Sigmoid colon (tissue), 7 donors: ENCODE measurements at regions of chr3 and their contacts with region 1.

Region 1: GRCh38 chr3:42012935-42013690 is 51.2 kb upstream of the ULK4 start:
- DNase-seq: peak; percentile 85
- H3K4me3 ChIP-seq: peak overlapping the region; percentile 42 to 99 (median 96)
- H3K27ac ChIP-seq: peak overlapping the region; percentile 90 to 95 (median 92)
- H3K4me1 ChIP-seq: peaks cover 0 to 39% (median 29%) of the 10 kb centered on the region in 4 donors
- H3K27me3 ChIP-seq: no peaks in the 10 kb centered on the region
- CTCF ChIP-seq: peak in 1 of 4 experiments; percentile 10
- EP300 ChIP-seq: no peak
- POLR2A ChIP-seq: peak in 1 of 2 donors; percentile 20

Region 2: GRCh38 chr3:41893977-41894376 is 119.1 kb before region 1 on chr3:
- intact Hi-C with region 1: loop called (anchors 5 kb)
- DNase-seq: no peak
- H3K4me3 ChIP-seq: no peak overlapping the region
- H3K27ac ChIP-seq: no peak overlapping the region
- H3K4me1 ChIP-seq: no peaks in the 10 kb centered on the region
- H3K27me3 ChIP-seq: no peaks in the 10 kb centered on the region
- CTCF ChIP-seq: peak in 3 of 4 experiments; percentile 20 to 56 (median 30)
- EP300 ChIP-seq: no peak
- POLR2A ChIP-seq: no peak

Region 3: DNA sequence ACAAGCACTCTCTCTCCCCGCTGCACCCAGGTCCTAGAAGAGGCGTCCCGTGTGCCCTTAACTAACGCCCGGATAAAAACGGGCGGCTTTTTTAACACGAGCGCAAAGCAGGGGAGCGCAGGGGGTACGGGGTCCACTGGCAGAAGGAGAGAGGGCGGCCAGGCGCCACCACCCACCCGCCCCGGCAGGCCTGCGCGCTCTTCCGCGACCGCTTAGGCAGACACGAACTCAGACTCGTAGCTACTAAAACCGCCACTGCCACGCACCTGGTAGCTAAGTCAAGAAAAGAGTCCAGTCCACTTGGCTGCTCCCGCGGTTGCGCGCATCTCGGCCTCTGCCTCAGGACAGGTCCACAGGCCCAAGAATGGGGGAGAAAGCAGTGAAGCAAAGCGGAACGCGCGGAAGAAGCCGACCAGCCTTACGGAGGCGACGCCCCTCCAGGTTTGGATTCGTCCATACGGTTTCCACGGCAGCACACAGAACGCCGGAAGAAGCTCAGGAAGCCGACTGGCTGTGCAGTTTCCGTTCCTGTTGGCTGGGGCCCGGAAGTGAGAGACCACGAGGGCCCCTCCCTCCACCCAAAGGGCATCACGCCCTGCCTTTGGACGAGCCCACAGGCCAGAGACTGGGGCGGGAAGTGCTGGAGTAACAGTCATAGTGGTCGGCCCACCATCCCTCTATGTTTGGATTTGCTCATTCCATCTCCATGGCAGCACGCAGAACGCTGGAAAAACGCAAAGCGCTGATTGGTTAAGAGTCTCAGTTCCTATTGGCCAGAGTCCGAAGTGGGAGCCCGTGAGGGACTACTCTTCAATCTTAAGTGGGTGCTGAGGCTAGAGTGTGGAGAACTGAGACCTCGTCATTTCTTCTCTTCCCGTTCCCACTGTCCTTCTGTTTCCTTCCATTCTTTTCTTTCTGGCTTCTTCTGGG is 51.1 kb before region 1 on chr3 and contains the start of gene ULK4:
- intact Hi-C with region 1: loop called (anchors 1 kb)
- DNase-seq: peak; percentile 99
- H3K4me3 ChIP-seq: peak within 1 kb of the TSS; percentile 79 to 97 (median 90)
- H3K27ac ChIP-seq: peak within 1 kb of the TSS; percentile 88 to 93 (median 90)
- H3K4me1 ChIP-seq: peaks cover 0 to 14% (median 10%) of the 10 kb centered on the region in 4 donors
- H3K27me3 ChIP-seq: no peaks in the 10 kb centered on the region
- CTCF ChIP-seq: no peak
- EP300 ChIP-seq: peak in 1 of 4 donors; percentile 32
- POLR2A ChIP-seq: peak in 1 of 2 donors; percentile 7
- total RNA-seq, gene ULK4: 8.9 to 18.6 (median 16.6) TPM

Region 4: DNA sequence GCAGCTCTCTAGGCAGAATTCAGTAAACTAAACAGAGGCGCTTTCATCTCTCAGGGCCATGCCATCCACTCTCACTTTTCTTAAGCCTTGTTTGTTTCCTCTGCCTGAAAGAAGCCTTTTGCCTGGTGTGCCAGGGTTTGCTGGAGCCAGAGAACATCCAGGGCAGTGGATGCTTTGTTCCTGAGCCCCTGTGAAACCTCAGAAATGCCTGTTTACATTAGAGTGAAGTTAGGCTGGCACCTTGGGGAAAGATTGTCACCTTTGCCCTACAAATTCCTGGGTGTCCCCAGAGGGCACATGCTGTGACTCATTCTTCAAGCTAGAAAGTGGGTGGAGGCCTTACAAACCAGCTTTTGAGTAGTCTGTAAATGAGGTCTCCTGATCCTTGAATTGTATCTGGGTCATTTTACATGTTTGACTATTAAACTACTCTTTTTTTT is 67.4 kb after region 1 on chr3:
- intact Hi-C with region 1: loop called (anchors 5 kb)
- DNase-seq: peak; percentile 85
- H3K4me3 ChIP-seq: no peak overlapping the region
- H3K27ac ChIP-seq: peak overlapping the region; percentile 79 to 86 (median 84)
- H3K4me1 ChIP-seq: peaks cover 0 to 62% (median 60%) of the 10 kb centered on the region in 4 donors
- H3K27me3 ChIP-seq: no peaks in the 10 kb centered on the region
- CTCF ChIP-seq: no peak
- EP300 ChIP-seq: peak; percentile 41 to 96 (median 74)
- POLR2A ChIP-seq: no peak

Region 5: GRCh38 chr3:42090973-42091731 is 78.0 kb after region 1 on chr3 and contains the start of gene TRAK1:
- intact Hi-C with region 1: loop called (anchors 2 kb)
- DNase-seq: peak; percentile 82
- H3K4me3 ChIP-seq: peak within 1 kb of the TSS; percentile 9 to 37 (median 25)
- H3K27ac ChIP-seq: peak within 1 kb of the TSS; percentile 74 to 88 (median 82)
- H3K4me1 ChIP-seq: peaks cover 0 to 48% (median 21%) of the 10 kb centered on the region in 4 donors
- H3K27me3 ChIP-seq: no peaks in the 10 kb centered on the region
- CTCF ChIP-seq: peak in 1 of 4 experiments; percentile 19
- EP300 ChIP-seq: peak in 1 of 4 donors; percentile 45
- POLR2A ChIP-seq: no peak
- total RNA-seq, gene TRAK1: 17.6 to 42.7 (median 27.2) TPM

Region 6: DNA sequence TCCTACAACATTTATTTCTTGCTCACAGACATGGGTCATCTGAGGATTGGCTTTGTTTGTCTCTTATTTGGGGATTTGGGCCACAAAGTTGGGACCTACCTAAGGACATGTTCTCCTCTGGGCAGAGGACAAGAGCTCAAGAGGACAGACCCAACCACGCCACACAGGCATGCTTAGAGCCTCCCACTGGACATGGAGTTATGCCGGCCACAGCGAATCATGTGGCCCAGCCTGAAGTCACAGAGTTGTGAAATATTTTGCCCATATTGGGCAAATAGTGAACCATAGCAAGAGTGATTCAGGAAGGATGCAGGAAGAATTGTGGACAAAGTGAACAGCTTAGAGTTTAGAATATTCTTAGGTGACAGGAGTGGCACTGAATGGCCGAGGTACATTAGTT is 87.9 kb after region 1 on chr3:
- intact Hi-C with region 1: loop called (anchors 1 kb)
- DNase-seq: no peak
- H3K4me3 ChIP-seq: no peak overlapping the region
- H3K27ac ChIP-seq: peak overlapping the region; percentile 11 to 70 (median 40)
- H3K4me1 ChIP-seq: peaks cover 0 to 58% (median 47%) of the 10 kb centered on the region in 4 donors
- H3K27me3 ChIP-seq: no peaks in the 10 kb centered on the region
- CTCF ChIP-seq: no peak
- EP300 ChIP-seq: no peak
- POLR2A ChIP-seq: no peak

Region 7: GRCh38 chr3:42394579-42395288 is 381.6 kb after region 1 on chr3:
- intact Hi-C with region 1: no loop called
- DNase-seq: no peak
- H3K4me3 ChIP-seq: no peak overlapping the region
- H3K27ac ChIP-seq: no peak overlapping the region
- H3K4me1 ChIP-seq: no peaks in the 10 kb centered on the region
- H3K27me3 ChIP-seq: no peaks in the 10 kb centered on the region
- CTCF ChIP-seq: no peak
- EP300 ChIP-seq: no peak
- POLR2A ChIP-seq: no peak